Activated T-helper 1 cell treated with anti-CD3 and anti-CD28 coated beads, Interleukin-12 subunit alpha, Interleukin-12 subunit beta, Interleukin-2, Interleukin-4 antibody, amounts not matched to agents 30 ng/mL and 10 ng/mL and 1 ng/mL, durations not matched to agents 14 hours and 24 hours and 36 hours (primary cell): ENCODE measurements at regions of chr12 and their contacts with region 1.

Region 1: GRCh38 chr12:68686595-68687521 is at the start of gene NUP107:
- DNase-seq: peak; percentile 95
- H3K4me3 Mint-ChIP-seq: peak within 1 kb of the TSS; percentile 99
- H3K27ac Mint-ChIP-seq: peak within 1 kb of the TSS; percentile 96
- H3K4me1 Mint-ChIP-seq: peaks cover 37% of the 10 kb centered on the region
- H3K27me3 Mint-ChIP-seq: peaks cover 3% of the 10 kb centered on the region
- total RNA-seq, gene NUP107: 123 and 135 TPM in 2 replicates

Region 2: DNA sequence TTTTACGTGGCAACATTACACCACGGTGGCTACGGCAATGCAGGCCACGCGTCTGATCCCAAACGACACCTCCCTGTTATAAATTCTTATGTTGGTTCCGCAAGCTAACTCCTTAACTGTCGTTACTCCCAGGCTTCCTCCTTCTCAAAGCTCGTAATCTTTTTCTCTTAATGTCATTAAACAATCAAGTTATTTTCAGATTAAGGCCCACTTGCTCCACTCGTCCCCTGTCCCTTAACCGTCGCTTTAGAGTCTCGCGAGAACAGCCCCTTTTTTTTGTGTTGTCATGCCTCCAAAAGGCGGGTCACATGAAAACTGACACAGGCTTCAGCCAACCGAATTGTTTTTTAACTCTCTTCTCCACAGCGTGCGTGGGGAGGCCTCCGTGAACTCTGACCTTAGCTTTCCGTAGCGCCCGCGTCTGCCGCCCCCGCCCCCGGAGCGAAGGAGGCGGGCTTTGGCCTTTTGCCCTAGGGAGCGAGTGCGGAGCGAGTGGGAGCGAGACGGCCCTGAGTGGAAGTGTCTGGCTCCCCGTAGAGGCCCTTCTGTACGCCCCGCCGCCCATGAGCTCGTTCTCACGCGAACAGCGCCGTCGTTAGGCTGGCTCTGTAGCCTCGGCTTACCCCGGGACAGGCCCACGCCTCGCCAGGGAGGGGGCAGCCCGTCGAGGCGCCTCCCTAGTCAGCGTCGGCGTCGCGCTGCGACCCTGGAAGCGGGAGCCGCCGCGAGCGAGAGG is 1417.8 kb before region 1 on chr12 and contains the start of gene CAND1:
- intact Hi-C with region 1: loop called (anchors 5 kb)
- DNase-seq: peak; percentile 94
- H3K4me3 Mint-ChIP-seq: peak within 1 kb of the TSS; percentile 92
- H3K27ac Mint-ChIP-seq: peak within 1 kb of the TSS; percentile 99
- H3K4me1 Mint-ChIP-seq: peaks cover 39% of the 10 kb centered on the region
- H3K27me3 Mint-ChIP-seq: no peaks in the 10 kb centered on the region
- total RNA-seq, gene CAND1: 185 and 209 TPM in 2 replicates

Region 3: GRCh38 chr12:68236421-68237059 is 450.3 kb before region 1 on chr12:
- intact Hi-C with region 1: loop called (anchors 5 kb)
- DNase-seq: peak; percentile 39
- H3K4me3 Mint-ChIP-seq: peak overlapping the region; percentile 84
- H3K27ac Mint-ChIP-seq: peak overlapping the region; percentile 93
- H3K4me1 Mint-ChIP-seq: peaks cover 94% of the 10 kb centered on the region
- H3K27me3 Mint-ChIP-seq: no peaks in the 10 kb centered on the region

Region 4: DNA sequence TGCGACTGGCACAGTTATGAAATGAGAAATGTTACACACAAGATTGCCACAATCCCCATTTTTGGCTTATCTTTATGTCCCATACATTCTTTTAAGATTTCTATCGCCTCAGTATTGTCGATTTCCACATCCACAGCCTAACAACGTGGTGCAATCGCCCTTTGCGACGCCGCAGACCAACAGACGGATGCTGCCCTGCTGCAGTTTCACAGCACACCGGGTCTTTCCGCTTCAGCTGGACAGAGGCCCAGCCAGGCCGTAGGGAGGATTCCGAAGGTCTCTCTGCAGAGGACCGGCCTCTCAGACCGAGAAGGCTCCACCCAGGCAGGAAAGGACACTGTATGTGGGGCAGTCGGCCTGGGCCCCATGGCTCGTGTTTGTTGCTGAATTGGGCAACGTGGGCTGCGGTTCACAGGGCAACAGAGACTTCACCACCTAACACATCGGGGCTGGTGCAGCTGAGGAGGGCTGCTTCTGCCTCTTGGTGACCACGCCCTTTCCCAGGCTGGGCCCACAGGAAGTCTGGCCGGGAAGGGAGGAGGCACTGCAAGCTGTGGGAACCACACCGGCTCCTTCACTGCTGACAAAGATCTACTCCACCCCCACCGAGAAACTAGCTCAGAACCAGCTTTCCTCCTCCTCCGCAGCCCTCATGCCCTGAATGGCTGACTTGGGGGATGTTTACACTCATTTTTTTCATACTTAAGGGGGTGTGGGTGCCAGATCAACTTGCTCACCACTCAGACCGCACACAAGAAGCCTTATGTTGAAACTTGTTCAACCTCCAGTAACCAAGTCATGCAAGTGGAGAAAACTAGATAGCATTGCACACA is 321.7 kb before region 1 on chr12:
- intact Hi-C with region 1: loop called (anchors 1 kb)
- DNase-seq: peak; percentile 85
- H3K4me3 Mint-ChIP-seq: peak overlapping the region; percentile 77
- H3K27ac Mint-ChIP-seq: peak overlapping the region; percentile 92
- H3K4me1 Mint-ChIP-seq: peaks cover 76% of the 10 kb centered on the region
- H3K27me3 Mint-ChIP-seq: no peaks in the 10 kb centered on the region

Region 5: DNA sequence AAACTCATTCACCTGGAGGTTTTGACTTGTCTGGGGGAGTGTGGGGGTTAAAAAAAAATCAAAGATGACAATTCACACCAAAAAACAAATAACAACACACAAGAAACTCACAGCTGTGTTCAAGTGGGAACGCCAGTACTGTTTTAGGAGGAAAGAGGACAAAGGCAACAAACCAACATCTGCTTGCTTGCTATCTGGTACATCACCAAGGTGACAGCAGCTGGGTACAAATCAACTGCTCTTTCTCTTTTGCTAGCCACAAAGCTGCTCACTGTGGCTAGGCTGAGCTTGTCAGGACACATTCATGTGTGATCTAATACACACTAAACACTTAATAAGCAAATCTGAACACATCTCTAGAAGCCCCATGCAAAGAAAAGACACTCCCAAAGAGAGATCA is 204.2 kb before region 1 on chr12:
- intact Hi-C with region 1: loop called (anchors 1 kb)
- DNase-seq: peak; percentile 44
- H3K4me3 Mint-ChIP-seq: peak overlapping the region; percentile 66
- H3K27ac Mint-ChIP-seq: peak overlapping the region; percentile 91
- H3K4me1 Mint-ChIP-seq: peaks cover 69% of the 10 kb centered on the region
- H3K27me3 Mint-ChIP-seq: no peaks in the 10 kb centered on the region

Region 6: GRCh38 chr12:68610370-68611093 is 76.3 kb before region 1 on chr12 and contains the start of gene RAP1B:
- intact Hi-C with region 1: loop called (anchors 1 kb)
- DNase-seq: peak; percentile 89
- H3K4me3 Mint-ChIP-seq: peak within 1 kb of the TSS; percentile 96
- H3K27ac Mint-ChIP-seq: peak within 1 kb of the TSS; percentile 96
- H3K4me1 Mint-ChIP-seq: peaks cover 52% of the 10 kb centered on the region
- H3K27me3 Mint-ChIP-seq: no peaks in the 10 kb centered on the region
- total RNA-seq, gene RAP1B: 244 and 263 TPM in 2 replicates

Region 7: GRCh38 chr12:68675101-68675842 is 11.6 kb before region 1 on chr12:
- intact Hi-C with region 1: loop called (anchors 1 kb)
- DNase-seq: peak; percentile 60
- H3K4me3 Mint-ChIP-seq: peak overlapping the region; percentile 68
- H3K27ac Mint-ChIP-seq: peak overlapping the region; percentile 89
- H3K4me1 Mint-ChIP-seq: peaks cover 38% of the 10 kb centered on the region
- H3K27me3 Mint-ChIP-seq: no peaks in the 10 kb centered on the region